ENCODE measurements at regions of chr9 and their contacts with region 1.

Region 1: DNA sequence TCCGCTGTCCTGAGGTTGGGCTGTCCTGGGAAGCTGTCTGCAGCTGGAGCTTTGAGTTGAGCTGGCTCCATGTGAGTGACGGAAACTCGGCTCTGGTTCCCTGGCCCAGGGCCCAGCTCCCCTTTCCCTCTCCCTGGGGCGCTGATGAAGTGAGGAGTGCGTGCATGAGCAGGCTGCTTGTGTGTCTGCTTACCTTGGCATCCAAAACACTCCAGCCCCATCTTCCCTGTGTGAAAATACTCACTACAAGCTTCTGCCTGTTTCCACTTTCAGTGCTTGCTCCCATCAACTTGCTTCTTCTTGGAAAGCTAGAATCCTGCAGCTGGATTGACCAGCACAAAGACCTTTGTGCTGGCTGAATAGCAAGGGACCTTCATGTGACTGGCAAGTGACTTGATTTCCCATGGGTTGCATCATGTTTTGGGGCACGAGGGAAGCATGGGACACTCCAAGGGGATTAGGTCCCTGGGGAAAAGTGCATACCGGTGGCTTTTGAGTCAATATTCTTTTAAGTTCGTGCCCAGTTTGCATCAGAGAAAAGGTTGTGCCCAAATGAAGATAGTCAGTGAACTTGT is 198.1 kb downstream of the GADD45G start:
- DNase-seq: peak; percentile 21 to 63
- H3K4me3 ChIP-seq: no peak overlapping the region
- H3K27ac ChIP-seq: no peak overlapping the region
- H3K4me1 ChIP-seq: no peaks in the 10 kb centered on the region
- H3K27me3 ChIP-seq: no peaks in the 10 kb centered on the region
- CTCF ChIP-seq: no peak
- POLR2A ChIP-seq: no peak

Region 2: GRCh38 chr9:89466451-89467277 is 336.2 kb before region 1 on chr9:
- intact Hi-C with region 1: loop called (anchors 5 kb)
- DNase-seq: no peak
- H3K4me3 ChIP-seq: no peak overlapping the region
- H3K27ac ChIP-seq: no peak overlapping the region
- H3K4me1 ChIP-seq: no peaks in the 10 kb centered on the region
- H3K27me3 ChIP-seq: no peaks in the 10 kb centered on the region
- CTCF ChIP-seq: no peak
- POLR2A ChIP-seq: no peak

Region 3: DNA sequence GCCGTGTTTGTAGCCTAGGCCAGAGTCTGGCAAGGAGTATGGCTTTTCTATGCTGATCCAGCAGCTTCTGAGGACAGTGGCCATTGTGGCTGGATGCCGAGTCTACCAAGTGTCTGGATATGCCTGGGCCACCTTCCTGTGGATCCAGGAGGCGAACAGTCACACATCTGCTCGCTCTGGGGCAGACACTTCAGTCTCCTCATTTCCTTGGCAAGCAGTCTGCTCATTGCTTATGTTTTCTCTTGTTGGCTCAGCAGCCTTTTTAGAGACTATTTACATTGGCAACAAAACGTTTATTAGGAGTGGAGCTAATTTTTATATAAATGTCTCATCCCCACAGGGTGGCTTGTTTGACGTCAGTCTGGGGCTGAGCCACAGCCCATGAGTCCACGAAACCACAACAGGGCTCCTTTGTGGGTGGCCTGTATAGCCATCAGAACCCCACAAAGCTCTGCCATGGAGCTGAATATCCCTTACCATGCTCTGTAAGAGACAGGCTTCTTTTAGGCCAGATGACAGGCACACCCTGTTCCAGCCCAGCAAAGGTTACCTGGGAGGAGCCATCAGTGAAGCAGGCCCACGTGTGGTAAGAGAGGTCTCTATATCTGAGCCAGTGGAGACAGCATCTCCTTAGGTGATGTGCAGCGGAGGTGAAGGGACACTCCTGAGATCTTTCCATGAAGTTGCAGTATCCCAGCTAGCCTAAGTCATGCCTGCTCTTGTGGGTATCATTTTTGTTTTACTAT is 618.1 kb after region 1 on chr9:
- intact Hi-C with region 1: loop called (anchors 10 kb)
- DNase-seq: peak in 1 of 2 donors; percentile 58
- H3K4me3 ChIP-seq: no peak overlapping the region
- H3K27ac ChIP-seq: peak overlapping the region; percentile 8 to 48
- H3K4me1 ChIP-seq: no peaks in the 10 kb centered on the region
- H3K27me3 ChIP-seq: no peaks in the 10 kb centered on the region
- CTCF ChIP-seq: no peak
- POLR2A ChIP-seq: no peak